ENCODE measurements at regions of chr3 and their contacts with region 1.

Region 1: GRCh38 chr3:185764163-185764979 is 60.5 kb downstream of the IGF2BP2 start:
- DNase-seq: no peak
- ATAC-seq: peak; percentile 38 to 60 (median 44)
- H3K4me3 ChIP-seq: peak overlapping the region in 7 of 12 donors; percentile 7 to 28 (median 22)
- H3K27ac ChIP-seq: peak overlapping the region in 7 of 12 donors; percentile 7 to 44 (median 22)
- H3K4me1 ChIP-seq: peaks cover 0 to 31% (median 21%) of the 10 kb centered on the region in 12 donors
- H3K27me3 ChIP-seq: no peaks in the 10 kb centered on the region
- CTCF ChIP-seq: no peak
- POLR2A ChIP-seq: no peak

Region 2: GRCh38 chr3:185677146-185677829 is 87.1 kb before region 1 on chr3:
- intact Hi-C with region 1: loop called in 2 of 10 experiments (anchors 2 to 10 kb)
- DNase-seq: no peak
- ATAC-seq: peak in 2 of 4 donors; percentile 46 to 53
- H3K4me3 ChIP-seq: no peak overlapping the region
- H3K27ac ChIP-seq: no peak overlapping the region
- H3K4me1 ChIP-seq: no peaks in the 10 kb centered on the region
- H3K27me3 ChIP-seq: no peaks in the 10 kb centered on the region
- CTCF ChIP-seq: peak; percentile 39 to 56 (median 47)
- POLR2A ChIP-seq: no peak